Breast epithelium (tissue), 4 donors: ENCODE measurements at regions of chr2 and their contacts with region 1.

Region 1: GRCh38 chr2:220377482-220377881 is 750.1 kb downstream of the SLC4A3 start:
- DNase-seq: no peak
- H3K4me3 ChIP-seq: no peak overlapping the region
- H3K27ac ChIP-seq: no peak overlapping the region
- H3K4me1 ChIP-seq: no peaks in the 10 kb centered on the region
- H3K27me3 ChIP-seq: no peaks in the 10 kb centered on the region
- CTCF ChIP-seq: no peak
- POLR2A ChIP-seq: no peak

Region 2: GRCh38 chr2:220228299-220229006 is 149.0 kb before region 1 on chr2:
- intact Hi-C with region 1: no loop called
- DNase-seq: no peak
- H3K4me3 ChIP-seq: no peak overlapping the region
- H3K27ac ChIP-seq: no peak overlapping the region
- H3K4me1 ChIP-seq: no peaks in the 10 kb centered on the region
- H3K27me3 ChIP-seq: no peaks in the 10 kb centered on the region
- CTCF ChIP-seq: no peak
- POLR2A ChIP-seq: no peak

Region 3: DNA sequence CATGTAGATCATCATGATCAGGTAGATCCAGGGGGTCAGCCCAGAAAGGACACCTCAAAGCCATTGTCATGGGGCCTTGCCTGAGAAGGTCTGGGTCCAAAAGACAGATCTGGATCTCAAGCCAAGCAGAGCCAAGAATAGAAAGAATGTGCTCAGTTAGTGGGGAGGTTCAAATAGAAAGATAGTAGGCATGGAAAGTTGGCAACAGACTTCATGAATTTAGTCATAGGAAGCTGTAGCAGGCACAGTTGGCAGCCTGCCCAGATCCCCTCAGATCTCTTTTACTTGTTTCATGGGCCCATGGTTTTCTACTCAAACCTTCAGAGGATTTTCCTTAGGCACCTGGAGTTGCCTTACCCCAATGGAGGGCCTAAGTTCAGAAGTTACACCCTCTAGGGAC is 17.0 kb after region 1 on chr2:
- intact Hi-C with region 1: loop called (anchors 1 kb)
- DNase-seq: no peak
- H3K4me3 ChIP-seq: no peak overlapping the region
- H3K27ac ChIP-seq: no peak overlapping the region
- H3K4me1 ChIP-seq: no peaks in the 10 kb centered on the region
- H3K27me3 ChIP-seq: no peaks in the 10 kb centered on the region
- CTCF ChIP-seq: no peak
- POLR2A ChIP-seq: no peak